Left ventricle myocardium superior (tissue), 1 donor: ENCODE measurements at regions of chr1 and their contacts with region 1.

Region 1: GRCh38 chr1:99808391-99809115 is 41.6 kb upstream of the AGL start:
- DNase-seq: no peak
- ATAC-seq: peak; percentile 92

Region 2: DNA sequence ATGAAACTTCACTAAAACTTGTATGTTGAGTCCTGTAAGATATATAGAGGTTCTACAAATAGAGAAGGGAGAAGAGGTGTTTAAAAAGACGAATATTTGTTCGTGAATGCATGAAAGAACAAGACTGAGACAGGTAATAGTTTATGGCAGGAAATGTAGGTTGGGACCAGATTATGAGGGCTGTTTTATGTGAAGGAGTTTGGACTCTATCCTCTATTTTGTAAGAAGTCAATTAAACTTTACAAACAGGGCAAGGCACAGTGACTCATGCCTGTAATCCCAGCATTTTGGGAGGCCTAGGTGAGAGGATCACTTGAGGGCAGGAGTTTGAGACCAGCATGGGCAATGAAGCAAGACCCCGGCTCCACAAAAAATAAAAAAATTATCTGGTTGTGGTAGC is 167.0 kb after region 1 on chr1:
- intact Hi-C with region 1: no loop called
- DNase-seq: no peak
- ATAC-seq: no peak

Region 3: DNA sequence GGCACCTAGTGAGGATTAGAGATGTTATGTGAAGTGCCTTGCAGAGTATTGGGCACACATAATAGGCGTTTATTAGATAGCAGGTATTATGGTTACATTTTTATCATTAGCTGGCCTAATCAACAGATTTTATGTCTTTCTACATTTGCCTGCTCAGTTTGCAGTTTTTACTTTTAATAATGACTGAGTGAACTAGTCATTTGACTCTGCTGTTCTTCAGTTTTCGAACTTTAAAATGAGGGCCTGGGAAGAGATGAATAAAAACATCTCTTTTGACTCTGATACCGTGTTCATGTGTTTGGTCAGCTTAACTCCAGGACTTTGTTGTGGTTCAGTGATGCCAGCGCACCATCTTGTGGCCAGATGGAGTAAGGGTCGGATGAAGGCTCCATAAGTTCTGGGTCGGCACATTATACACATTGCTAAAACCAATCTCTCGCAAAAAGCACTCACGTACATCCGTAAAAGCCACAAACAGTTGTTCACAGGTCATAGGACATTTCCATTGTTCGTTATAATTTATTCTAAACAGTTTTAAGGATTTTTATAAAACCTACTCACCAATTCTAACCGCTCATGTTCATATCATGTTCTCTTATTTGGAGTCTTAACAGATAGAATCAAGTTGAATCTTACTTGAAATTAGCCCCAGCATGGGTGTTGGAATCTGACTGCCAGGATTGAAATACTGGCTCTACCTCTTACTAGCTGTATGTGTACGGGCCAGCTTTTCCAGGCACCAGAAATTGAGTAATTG is 651.0 kb after region 1 on chr1:
- intact Hi-C with region 1: loop called (anchors 10 kb)
- DNase-seq: peak; percentile 77
- ATAC-seq: peak; percentile 86